Aorta (tissue), 5 donors: ENCODE measurements at regions of chr6 and their contacts with region 1.

Region 1: DNA sequence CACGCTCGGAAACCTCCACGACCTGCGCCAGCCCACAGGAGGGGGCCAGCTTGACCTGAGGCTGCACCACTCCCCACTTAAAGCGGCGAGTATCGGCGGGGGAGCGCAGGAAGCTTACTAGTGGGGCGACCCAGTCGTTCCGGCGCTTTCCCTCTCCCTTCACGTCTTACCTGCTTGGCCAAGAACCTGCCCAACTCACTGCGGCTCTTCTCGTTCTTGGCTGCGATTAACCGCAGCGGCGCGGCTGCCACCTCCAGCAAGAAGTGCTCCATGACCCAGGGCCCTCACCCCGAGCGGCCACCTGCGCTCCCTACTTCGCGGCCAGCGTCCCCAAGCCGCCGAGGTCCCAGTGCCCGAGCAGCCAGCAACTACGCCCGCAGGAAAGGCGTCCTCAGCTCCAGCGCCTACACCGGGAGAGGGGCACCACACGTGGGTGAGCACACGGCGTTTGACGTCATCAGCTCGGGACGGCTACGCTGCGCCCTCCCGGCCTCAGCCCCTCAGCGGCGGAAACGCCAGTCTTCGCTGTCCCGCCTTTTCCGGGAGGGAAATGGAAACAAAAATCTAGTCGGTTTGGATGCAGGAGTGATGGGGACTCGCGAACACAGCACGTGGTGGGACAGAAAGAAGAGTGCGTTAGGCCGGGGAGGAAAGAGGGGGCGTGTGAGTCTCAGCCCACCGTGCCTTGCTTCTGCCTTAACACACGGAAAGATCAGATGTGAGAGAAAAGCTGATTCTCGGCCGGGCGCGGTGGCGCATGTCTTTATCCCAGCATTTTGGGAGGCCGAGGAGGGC is at the start of gene MDN1:
- DNase-seq: peak; percentile 94 to 96
- ATAC-seq: peak; percentile 99
- H3K4me3 ChIP-seq: peak within 1 kb of the TSS; percentile 63 to 64
- H3K27ac ChIP-seq: peak within 1 kb of the TSS in 1 of 2 donors; percentile 73
- H3K4me1 ChIP-seq: no peaks in the 10 kb centered on the region
- H3K27me3 ChIP-seq: no peaks in the 10 kb centered on the region
- total RNA-seq, gene MDN1: 30.8 to 37.1 TPM

Region 2: GRCh38 chr6:89527634-89528033 is 291.9 kb before region 1 on chr6:
- intact Hi-C with region 1: no loop called
- DNase-seq: no peak
- ATAC-seq: no peak
- H3K4me3 ChIP-seq: no peak overlapping the region
- H3K27ac ChIP-seq: no peak overlapping the region
- H3K4me1 ChIP-seq: peaks cover 2 to 18% of the 10 kb centered on the region in 2 donors
- H3K27me3 ChIP-seq: no peaks in the 10 kb centered on the region

Region 3: DNA sequence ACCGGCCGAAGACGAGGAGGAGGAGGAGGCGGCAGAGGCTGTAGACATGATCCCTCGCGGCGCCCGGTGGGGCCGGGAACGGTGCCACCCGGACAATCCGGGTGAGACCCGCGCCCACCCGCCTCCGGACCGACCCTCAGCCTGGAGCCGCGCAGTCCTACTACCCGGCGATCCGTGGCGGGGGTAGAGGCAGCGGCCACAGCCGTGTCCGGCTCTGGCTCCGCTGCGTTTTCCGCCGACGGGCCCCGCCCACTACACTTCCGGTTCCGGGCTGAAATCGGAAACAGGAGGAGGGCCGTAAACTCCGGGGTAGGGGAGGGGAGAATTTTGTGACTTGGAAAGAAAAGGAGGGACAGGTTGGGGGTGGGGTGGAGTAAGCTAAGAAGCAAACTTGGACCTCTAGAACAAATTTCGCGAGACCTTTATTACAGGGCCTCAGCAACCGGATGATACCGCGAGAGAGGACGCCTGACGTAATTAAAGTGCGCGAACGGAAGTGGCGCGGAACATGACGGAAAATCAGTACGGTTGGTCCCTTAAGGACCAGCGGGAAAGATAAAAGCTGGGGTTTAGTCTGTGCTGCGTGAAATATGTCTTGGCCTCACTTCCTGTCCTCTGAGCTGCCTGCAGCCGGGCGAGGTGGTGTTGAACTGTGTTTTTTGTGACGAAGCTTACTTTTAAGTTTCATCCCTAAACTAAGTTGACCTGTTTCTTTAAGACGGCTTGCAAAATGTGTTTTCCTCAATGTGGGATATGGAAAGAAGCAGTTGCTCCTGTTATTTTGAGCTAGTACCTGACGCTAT is 767.5 kb after region 1 on chr6 and contains the start of gene MAP3K7:
- intact Hi-C with region 1: loop called in 1 of 2 experiments (anchors 10 kb)
- DNase-seq: peak; percentile 93 to 96
- ATAC-seq: peak; percentile 98
- H3K4me3 ChIP-seq: peak within 1 kb of the TSS; percentile 85 to 98
- H3K27ac ChIP-seq: peak within 1 kb of the TSS; percentile 34 to 81
- H3K4me1 ChIP-seq: peaks cover 0 to 5% of the 10 kb centered on the region in 2 donors
- H3K27me3 ChIP-seq: no peaks in the 10 kb centered on the region
- total RNA-seq, gene MAP3K7: 24.8 to 29.2 TPM